Activated T-helper 1 cell treated with anti-CD3 and anti-CD28 coated beads, Interleukin-12 subunit alpha, Interleukin-12 subunit beta, Interleukin-2, Interleukin-4 antibody, amounts not matched to agents 30 ng/mL and 10 ng/mL and 1 ng/mL, durations not matched to agents 14 hours and 24 hours and 36 hours (primary cell): ENCODE measurements at regions of chr3 and their contacts with region 1.

Region 1: DNA sequence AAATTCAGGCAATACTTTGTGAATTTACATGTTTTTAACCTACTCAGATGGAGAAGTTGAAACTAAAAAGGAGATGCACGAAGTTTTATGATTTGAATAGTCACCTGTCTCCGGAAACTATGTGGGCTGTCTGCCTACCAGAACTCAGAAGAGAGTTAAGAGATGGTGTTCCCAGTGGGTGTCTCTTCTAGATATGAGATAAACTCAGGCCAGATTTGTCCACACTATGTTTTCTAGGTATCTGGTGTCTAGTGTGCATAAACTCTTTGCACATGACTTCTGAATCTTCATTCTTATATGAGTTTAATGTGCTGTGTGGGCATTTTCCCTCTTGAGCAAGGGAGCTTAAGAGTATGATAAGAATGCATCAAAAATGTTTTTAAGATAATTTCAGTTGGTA is 222.8 kb downstream of the FOXP1 start:
- DNase-seq: no peak
- H3K4me3 Mint-ChIP-seq: no peak overlapping the region
- H3K27ac Mint-ChIP-seq: peak overlapping the region; percentile 80
- H3K4me1 Mint-ChIP-seq: peaks cover 19% of the 10 kb centered on the region
- H3K27me3 Mint-ChIP-seq: peaks cover 25% of the 10 kb centered on the region

Region 2: GRCh38 chr3:71380096-71380495 is 19.3 kb after region 1 on chr3:
- intact Hi-C with region 1: loop called (anchors 1 kb)
- DNase-seq: no peak
- H3K4me3 Mint-ChIP-seq: no peak overlapping the region
- H3K27ac Mint-ChIP-seq: no peak overlapping the region
- H3K4me1 Mint-ChIP-seq: peaks cover 26% of the 10 kb centered on the region
- H3K27me3 Mint-ChIP-seq: peaks cover 21% of the 10 kb centered on the region

Region 3: DNA sequence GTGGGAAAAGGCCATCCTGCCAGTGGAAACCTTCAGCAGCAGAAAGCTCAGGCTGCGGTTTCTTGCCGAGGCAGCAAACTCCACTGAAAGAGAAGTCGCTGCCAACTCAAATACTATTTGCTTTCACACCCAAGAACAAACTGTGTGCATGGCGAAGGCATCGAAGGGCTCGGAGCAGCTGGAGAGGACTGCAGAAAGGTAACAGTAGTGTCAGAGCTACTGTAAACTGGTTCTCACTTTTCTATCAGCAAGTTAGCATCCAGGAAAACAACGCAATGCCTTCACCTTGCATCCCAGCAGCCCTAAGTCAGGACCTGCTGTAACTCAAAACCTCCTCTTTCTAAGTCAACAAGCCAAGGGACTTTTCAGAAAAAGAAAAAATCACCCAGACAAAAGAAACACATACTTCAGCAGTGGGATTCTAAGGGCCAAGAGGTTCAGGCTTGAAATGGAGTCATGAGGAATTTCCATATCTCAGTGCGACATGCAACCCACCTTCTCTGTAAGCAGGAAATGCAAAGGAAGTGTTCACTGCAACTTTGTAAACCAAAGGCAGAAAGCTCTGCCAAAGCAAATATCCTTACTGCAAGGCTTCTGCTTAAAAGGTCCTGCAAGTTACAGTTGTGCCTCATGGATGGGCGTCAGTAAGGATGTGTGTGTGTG is 29.3 kb after region 1 on chr3:
- intact Hi-C with region 1: loop called (anchors 1 kb)
- DNase-seq: no peak
- H3K4me3 Mint-ChIP-seq: peak overlapping the region; percentile 10
- H3K27ac Mint-ChIP-seq: peak overlapping the region; percentile 27
- H3K4me1 Mint-ChIP-seq: peaks cover 33% of the 10 kb centered on the region
- H3K27me3 Mint-ChIP-seq: peaks cover 18% of the 10 kb centered on the region

Region 4: DNA sequence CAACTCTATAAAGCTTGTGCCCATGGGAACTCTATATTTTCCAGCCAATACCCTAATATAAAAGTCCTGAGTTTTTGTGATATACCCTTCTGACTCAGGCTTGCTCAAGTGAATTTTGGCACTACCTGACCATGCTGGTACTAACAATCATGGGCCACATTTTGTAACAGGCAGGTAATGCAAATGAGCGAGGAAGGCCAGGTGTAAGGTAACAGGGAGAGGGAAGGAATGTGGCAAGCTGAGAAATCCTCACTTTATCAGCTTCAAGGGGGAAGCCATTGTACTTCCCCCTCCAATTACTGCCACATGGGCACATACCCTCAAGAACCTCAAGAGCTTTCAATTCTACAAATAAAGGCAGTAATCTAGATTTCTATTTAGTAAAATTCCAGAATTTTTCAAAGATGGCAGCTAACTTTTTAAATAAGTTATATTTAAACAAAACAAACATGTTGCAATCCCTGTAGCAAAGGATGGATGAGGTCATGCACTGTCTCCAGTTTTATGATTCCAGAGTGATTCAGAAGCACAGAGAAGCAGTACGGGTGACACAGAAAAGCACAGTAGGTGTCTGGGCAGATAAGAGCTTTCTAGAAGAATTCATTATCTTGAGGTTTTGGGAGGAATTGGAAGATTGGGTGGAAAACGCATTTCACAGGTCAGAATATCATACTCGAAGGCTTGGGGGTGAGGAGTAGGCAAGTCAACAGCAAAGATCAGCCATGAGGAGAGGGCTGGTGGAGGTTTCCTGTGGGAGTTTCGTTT is 135.1 kb after region 1 on chr3:
- intact Hi-C with region 1: loop called (anchors 5 kb)
- DNase-seq: peak; percentile 4
- H3K4me3 Mint-ChIP-seq: peak overlapping the region; percentile 22
- H3K27ac Mint-ChIP-seq: peak overlapping the region; percentile 40
- H3K4me1 Mint-ChIP-seq: peaks cover 57% of the 10 kb centered on the region
- H3K27me3 Mint-ChIP-seq: peaks cover 6% of the 10 kb centered on the region

Region 5: DNA sequence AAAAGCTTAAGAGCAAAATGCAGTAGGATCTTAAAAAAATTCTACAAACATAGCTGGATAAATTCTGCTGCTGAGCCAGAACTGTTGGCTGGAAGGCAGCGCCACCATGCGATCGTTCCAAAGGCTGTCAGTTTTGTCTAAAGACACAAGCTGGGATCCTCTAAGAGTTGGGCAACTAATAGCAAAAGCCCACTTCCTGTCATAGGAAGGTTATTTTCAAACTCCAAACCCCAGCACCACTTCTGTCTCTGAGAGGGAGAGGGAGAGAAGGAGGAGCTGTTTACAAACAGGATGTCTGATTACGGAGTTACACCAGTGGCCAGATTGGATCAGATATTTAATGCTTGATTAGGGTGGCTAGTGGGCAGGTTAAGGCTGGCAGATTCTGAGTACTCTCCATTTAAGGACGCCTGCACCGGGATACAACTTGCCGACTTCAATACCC is 320.5 kb after region 1 on chr3:
- intact Hi-C with region 1: loop called (anchors 5 kb)
- DNase-seq: no peak
- H3K4me3 Mint-ChIP-seq: no peak overlapping the region
- H3K27ac Mint-ChIP-seq: no peak overlapping the region
- H3K4me1 Mint-ChIP-seq: peaks cover 12% of the 10 kb centered on the region
- H3K27me3 Mint-ChIP-seq: no peaks in the 10 kb centered on the region